ENCODE measurements at regions of chr1 and their contacts with region 1.

Region 1: DNA sequence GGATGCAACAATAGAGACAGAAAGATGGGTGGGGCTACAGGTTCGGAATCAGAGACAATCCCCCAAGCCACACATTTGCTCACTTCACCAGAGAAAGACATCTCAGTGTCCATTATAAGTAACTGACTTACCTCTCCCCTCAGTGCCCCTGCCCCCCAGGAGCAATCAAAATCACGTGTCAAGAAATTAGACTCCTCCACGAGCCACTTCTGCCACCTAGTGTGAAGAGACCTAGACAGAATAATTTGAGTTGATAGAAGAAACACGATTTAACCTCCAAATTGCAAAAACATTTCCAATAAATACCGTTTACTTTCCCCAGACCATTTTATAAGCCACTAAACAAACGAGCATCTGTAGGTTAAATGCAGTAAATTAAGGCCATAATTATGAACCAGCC is 123.2 kb downstream of the SLC30A10 start:
- DNase-seq: no peak
- CTCF ChIP-seq: peak; percentile 10

Region 2: DNA sequence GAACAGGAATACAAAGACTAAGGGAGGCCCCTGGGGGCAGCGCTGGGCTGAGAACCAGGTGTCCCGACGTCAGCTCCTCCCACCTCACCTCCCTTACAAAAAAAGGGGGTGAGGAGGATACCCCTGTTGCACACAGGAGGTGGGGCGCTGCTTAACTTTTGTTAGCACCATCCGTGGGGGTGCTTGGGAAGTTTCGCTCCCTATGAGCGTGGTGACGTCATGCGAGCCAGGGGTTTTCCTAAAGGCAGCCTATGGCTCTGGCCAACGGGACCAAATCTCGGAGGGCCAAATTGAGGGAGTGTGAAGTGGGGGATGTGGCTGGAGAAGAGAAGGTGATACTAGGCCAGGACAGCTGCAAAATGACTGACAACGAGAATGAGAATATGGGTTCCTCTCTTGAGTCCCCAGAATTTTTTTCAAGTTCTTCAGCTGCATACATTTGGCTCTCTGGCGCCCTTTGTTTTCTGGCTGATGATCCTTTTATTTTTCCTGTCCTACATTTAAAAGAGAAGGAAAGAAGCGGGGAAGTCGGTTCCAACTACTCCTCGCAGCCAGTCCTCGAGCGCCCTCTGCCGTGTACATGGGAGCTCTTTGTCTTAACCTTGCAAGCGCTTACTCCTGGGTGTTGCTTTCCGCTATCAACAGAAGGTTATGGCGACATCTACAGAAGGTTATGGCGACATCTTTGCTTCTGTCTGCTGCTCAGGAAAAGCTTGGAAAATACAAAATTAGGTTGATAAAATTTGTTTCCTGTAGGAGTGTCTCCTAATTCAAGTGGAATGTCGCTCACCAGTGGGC is 144.3 kb before region 1 on chr1:
- in situ Hi-C with region 1: loop called (anchors 10 kb)
- DNase-seq: peak; percentile 46
- CTCF ChIP-seq: peak; percentile 88

Region 3: GRCh38 chr1:219858980-219859379 is 53.8 kb after region 1 on chr1:
- in situ Hi-C with region 1: no loop called
- DNase-seq: no peak
- CTCF ChIP-seq: no peak

Measured in GM13977 (cell line).